Activated B cell treated with CpG ODN at 0.5 μM for 24 hours (primary cell): ENCODE measurements at regions of chr21 and their contacts with region 1.

Region 1: DNA sequence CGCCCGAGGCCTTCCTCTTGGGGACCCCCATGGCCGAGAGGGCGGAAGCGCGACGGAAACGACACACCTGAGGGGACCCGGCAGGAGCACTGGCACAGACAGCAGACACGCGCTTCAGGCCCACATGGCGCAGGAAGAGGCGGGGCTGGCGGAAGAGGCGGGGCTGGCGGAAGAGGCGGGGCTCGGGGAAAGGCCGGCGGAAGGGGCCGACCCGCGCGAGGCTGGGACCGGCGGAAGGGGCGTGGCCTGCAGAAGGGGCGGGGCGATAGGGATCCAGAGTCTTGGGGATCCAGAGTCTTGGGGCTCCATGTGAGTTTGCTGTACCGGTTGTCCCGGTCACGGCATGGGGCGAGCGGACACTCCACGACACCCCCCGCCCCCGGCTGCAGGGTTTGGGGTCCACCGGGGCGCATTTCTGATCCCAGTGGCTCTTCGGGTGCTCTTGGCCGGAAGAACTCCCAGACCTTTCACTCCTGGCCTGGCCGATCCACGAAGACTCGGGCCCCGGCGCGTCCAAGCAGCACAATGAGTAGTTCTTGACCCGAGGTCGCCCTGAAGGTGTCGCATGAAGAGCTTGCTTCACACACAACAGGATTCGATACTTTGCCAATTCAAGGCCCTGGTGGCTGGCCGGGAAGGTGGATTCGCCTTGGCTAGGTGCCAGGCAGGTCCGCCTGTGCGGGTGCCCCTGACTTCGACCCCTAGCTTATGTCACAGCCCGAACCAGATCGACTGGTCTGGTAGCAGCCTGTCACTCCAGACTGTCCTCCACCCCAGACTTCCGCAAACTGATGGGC is at the start of gene URB1:
- DNase-seq: peak; percentile 97
- ATAC-seq: peak; percentile 97
- H3K4me3 Mint-ChIP-seq: peak within 1 kb of the TSS; percentile 87
- H3K27ac Mint-ChIP-seq: peak within 1 kb of the TSS; percentile 83
- H3K4me1 Mint-ChIP-seq: peaks cover 41% of the 10 kb centered on the region
- H3K27me3 Mint-ChIP-seq: peaks cover 6% of the 10 kb centered on the region
- CTCF ChIP-seq: no peak
- total RNA-seq, gene URB1: 18.1 and 22.2 TPM in 2 replicates

Region 2: GRCh38 chr21:32426592-32427051 is 33.5 kb after region 1 on chr21:
- CTCF ChIA-PET with region 1: no interaction called
- POLR2A ChIA-PET with region 1: no interaction called
- intact Hi-C with region 1: no loop called
- DNase-seq: no peak
- ATAC-seq: no peak
- H3K4me3 Mint-ChIP-seq: no peak overlapping the region
- H3K27ac Mint-ChIP-seq: no peak overlapping the region
- H3K4me1 Mint-ChIP-seq: no peaks in the 10 kb centered on the region
- H3K27me3 Mint-ChIP-seq: peaks cover 6% of the 10 kb centered on the region
- CTCF ChIP-seq: no peak

Region 3: GRCh38 chr21:32569261-32570230 is 176.5 kb after region 1 on chr21:
- CTCF ChIA-PET with region 1: no interaction called
- POLR2A ChIA-PET with region 1: no interaction called
- intact Hi-C with region 1: loop called (anchors 1 kb)
- DNase-seq: peak; percentile 42
- ATAC-seq: peak; percentile 90
- H3K4me3 Mint-ChIP-seq: peak overlapping the region; percentile 87
- H3K27ac Mint-ChIP-seq: no peak overlapping the region
- H3K4me1 Mint-ChIP-seq: peaks cover 5% of the 10 kb centered on the region
- H3K27me3 Mint-ChIP-seq: peaks cover 26% of the 10 kb centered on the region
- CTCF ChIP-seq: no peak